WTC11 (cell line): ENCODE measurements at regions of chr6 and their contacts with region 1.

Region 1: GRCh38 chr6:7276199-7276524 is 36.8 kb downstream of the SSR1 start:
- DNase-seq: no peak
- ATAC-seq: no peak
- H3K4me3 Mint-ChIP-seq: no peak overlapping the region
- H3K27ac Mint-ChIP-seq: no peak overlapping the region
- H3K4me1 Mint-ChIP-seq: no peaks in the 10 kb centered on the region
- H3K27me3 Mint-ChIP-seq: no peaks in the 10 kb centered on the region
- CTCF ChIP-seq: no peak

Region 2: GRCh38 chr6:7261032-7261841 is 14.9 kb before region 1 on chr6:
- CTCF ChIA-PET with region 1: interaction called, 39 read pairs
- POLR2A ChIA-PET with region 1: no interaction called
- DNase-seq: peak; percentile 91
- ATAC-seq: peak; percentile 96
- H3K4me3 Mint-ChIP-seq: peak overlapping the region; percentile 86
- H3K27ac Mint-ChIP-seq: peak overlapping the region; percentile 95
- H3K4me1 Mint-ChIP-seq: peaks cover 27% of the 10 kb centered on the region
- H3K27me3 Mint-ChIP-seq: no peaks in the 10 kb centered on the region; the same call in 1 of the 2 replicates
- CTCF ChIP-seq: no peak

Region 3: GRCh38 chr6:7389451-7390225 is 113.5 kb after region 1 on chr6 and contains the starts of genes CAGE1 and RIOK1:
- CTCF ChIA-PET with region 1: interaction called, 25 read pairs
- POLR2A ChIA-PET with region 1: no interaction called
- DNase-seq: peak; percentile 94
- ATAC-seq: peak; percentile 99
- H3K4me3 Mint-ChIP-seq: peak within 1 kb of the TSS; percentile 92
- H3K27ac Mint-ChIP-seq: peak within 1 kb of the TSS; percentile 95
- H3K4me1 Mint-ChIP-seq: peaks cover 25% of the 10 kb centered on the region
- H3K27me3 Mint-ChIP-seq: no peaks in the 10 kb centered on the region
- CTCF ChIP-seq: no peak
- total RNA-seq, gene CAGE1: 0.07 to 0.30 TPM (median 0.11 TPM) in 3 replicates
- total RNA-seq, gene RIOK1: 16.7 to 25.6 TPM (median 20.2 TPM) in 3 replicates

Region 4: DNA sequence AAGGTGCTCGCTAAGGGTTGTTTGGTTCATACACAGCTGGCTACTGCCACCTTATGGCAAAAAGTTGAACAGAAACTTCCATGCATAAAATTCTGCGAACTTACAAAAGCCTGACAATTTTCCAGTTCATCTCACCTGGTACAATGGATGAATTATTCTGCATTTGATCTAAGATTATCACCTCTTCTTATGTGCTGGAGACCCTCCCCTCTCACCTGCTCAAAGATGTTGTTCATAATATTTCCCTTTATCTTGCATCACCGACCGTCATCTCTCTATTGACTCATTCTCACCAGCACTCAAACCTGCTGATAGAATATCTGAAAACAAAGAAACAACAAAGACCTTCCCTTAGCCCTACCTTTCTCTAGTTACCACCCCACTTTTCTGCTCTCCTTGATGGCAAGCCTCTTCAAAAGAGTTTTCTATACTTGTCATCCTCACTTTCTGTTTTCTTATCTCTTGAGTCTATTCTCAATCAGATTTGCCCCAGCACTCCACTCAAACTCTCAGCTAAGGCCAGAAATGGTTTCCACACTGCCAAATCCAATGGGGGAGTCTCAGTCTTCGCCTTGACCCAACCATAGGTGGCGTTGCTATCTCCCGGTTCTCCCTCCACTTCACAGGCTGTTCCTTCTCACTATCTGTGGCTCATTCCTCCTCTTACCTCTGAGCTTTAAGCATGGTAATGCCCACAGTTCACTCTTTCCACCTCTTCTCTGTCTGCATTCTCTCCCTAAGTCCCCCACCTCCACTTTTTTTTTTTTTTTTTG is 339.6 kb after region 1 on chr6:
- CTCF ChIA-PET with region 1: interaction called, 22 read pairs
- POLR2A ChIA-PET with region 1: no interaction called
- DNase-seq: peak; percentile 35
- ATAC-seq: peak; percentile 76
- H3K4me3 Mint-ChIP-seq: no peak overlapping the region
- H3K27ac Mint-ChIP-seq: peak overlapping the region; percentile 46; the same call in 1 of the 2 replicates
- H3K4me1 Mint-ChIP-seq: peaks cover 5% of the 10 kb centered on the region
- H3K27me3 Mint-ChIP-seq: no peaks in the 10 kb centered on the region
- CTCF ChIP-seq: peak; percentile 51; the same call in 1 of the 2 replicates